ENCODE measurements at regions of chr3 and their contacts with region 1.

Region 1: DNA sequence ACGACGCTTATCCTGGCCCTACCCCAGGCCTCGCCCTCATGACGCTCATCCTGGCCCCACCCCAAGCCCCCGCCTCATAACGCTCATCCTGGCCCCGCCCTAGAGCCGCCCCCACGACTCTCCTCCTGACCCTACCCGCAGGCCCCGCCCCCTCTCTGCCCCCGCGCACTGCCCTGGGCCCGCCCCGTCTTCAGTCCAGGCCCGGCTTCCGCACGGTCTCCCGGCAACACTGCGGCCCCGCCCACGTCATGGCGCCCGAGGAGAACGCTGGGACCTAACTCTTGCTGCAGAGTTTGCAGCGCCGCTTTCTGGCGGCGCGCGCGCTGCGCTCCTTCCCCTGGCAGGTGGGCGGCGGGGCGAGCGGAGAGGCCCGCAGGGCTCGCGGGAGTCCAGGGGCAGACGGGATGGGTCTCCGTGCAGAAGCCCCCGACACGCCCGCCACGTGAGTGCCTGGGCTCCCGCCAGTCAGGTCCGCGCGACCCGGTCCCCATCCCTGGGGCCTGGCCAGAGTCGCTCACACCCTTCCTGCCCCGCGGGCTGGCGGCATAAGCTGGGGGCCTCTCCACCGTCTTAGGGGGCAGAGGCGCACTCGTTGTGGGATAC is 52.5 kb upstream of the ROPN1B start:
- DNase-seq: peak; percentile 98
- H3K4me3 Mint-ChIP-seq: peak overlapping the region; percentile 84
- H3K27ac Mint-ChIP-seq: peak overlapping the region; percentile 78
- H3K4me1 Mint-ChIP-seq: peaks cover 31% of the 10 kb centered on the region
- H3K27me3 Mint-ChIP-seq: no peaks in the 10 kb centered on the region

Region 2: GRCh38 chr3:125519678-125520589 is 396.5 kb before region 1 on chr3 and contains the start of gene SNX4:
- CTCF ChIA-PET with region 1: no interaction called
- intact Hi-C with region 1: loop called (anchors 2 kb)
- DNase-seq: peak; percentile 89
- H3K4me3 Mint-ChIP-seq: peak within 1 kb of the TSS; percentile 91
- H3K27ac Mint-ChIP-seq: peak within 1 kb of the TSS; percentile 82
- H3K4me1 Mint-ChIP-seq: peaks cover 41% of the 10 kb centered on the region
- H3K27me3 Mint-ChIP-seq: no peaks in the 10 kb centered on the region
- total RNA-seq, gene SNX4: 24.8 to 27.8 TPM

Region 3: DNA sequence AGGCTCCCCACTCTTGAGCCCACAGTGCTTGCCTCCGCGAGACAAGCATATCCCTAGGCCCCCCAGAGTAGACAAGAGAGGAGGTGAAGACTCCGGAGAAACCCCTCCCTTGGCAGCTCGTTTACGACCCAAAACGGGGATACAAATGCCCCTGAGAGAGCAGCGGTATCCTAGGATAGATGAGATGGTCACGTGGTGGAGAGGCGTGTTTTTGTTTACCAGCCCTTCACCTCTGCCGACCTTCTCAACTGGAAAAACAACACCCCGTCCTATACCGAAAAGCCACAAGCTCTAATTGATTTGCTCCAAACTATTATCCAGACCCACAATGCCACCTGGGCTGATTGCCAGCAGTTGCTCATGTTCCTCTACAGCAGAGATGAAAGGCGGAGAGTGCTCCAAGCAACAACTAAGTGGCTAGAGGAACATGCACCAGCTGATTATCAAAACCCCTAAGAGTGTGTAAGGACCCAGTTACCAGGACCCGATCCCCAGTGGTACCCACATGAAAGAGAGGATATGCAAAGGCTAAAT is 221.6 kb before region 1 on chr3:
- CTCF ChIA-PET with region 1: no interaction called
- intact Hi-C with region 1: loop called (anchors 5 kb)
- DNase-seq: no peak
- H3K4me3 Mint-ChIP-seq: no peak overlapping the region
- H3K27ac Mint-ChIP-seq: no peak overlapping the region
- H3K4me1 Mint-ChIP-seq: no peaks in the 10 kb centered on the region
- H3K27me3 Mint-ChIP-seq: peaks cover 3% of the 10 kb centered on the region

Region 4: DNA sequence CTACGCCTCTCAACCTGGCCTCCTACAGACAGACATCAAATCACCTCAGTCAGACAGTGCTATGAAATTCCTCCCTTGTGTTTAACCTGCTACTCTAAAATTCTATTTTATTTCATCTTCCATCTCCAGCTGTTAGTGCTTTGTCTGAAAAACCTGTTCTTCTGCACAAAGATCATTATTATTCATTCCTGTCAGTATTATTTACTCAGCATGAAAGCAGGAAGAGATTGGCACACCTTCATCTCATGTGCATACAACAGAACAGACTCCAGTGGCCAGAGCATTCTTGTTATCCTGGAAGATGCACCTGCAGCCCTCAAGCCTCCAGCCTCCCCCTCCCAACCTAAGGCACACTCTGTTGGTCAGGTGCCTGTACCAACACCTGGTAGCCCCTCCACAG is 50.7 kb after region 1 on chr3:
- CTCF ChIA-PET with region 1: no interaction called
- intact Hi-C with region 1: loop called (anchors 10 kb)
- DNase-seq: no peak
- H3K4me3 Mint-ChIP-seq: no peak overlapping the region
- H3K27ac Mint-ChIP-seq: no peak overlapping the region
- H3K4me1 Mint-ChIP-seq: peaks cover 3% of the 10 kb centered on the region
- H3K27me3 Mint-ChIP-seq: peaks cover 19% of the 10 kb centered on the region

Region 5: DNA sequence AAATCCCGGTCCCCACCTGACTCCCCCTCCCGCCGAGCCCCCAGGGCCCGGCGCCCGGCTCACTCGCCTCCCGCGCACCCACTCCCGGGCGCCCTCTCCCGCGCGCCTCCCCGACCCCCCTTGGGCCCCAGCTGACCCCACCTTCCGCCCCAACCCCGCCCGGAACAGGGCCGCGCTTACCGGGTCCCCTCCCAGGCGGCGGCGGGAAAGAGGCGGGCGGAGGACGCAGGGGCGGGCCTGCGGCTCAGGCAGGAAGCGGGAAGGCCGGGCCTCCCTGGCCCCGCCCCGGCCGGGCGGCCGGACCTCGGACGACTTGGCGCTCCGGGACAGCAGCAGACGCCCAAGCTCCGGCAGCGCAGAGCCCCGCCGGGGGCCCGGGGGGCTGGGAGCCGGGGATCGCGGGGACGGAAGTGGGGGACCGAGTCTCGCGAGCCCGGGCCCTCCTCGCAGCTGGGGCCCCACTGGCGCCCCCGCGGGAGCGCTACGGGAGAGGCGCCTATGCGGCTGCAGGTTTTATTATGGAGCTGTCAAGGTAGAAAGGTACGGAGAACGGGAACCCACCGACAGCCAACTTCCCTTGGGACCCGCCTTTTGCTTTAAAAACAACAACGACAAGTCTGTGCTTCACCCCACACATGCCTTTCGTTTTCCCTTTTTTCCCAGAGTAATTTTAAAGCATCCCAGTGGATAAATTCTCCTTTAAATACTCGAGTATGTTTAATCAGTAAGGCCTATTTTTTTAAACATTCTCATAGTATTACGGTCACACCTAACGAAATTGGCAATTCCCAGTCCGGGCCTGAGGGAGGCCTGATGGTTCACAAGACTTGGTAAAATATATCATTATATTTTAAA is 167.7 kb after region 1 on chr3 and contains the start of gene SLC41A3:
- CTCF ChIA-PET with region 1: no interaction called
- intact Hi-C with region 1: loop called (anchors 1 kb)
- DNase-seq: peak; percentile 88
- H3K4me3 Mint-ChIP-seq: peak within 1 kb of the TSS; percentile 92
- H3K27ac Mint-ChIP-seq: peak within 1 kb of the TSS; percentile 84
- H3K4me1 Mint-ChIP-seq: peaks cover 20% of the 10 kb centered on the region
- H3K27me3 Mint-ChIP-seq: no peaks in the 10 kb centered on the region
- total RNA-seq, gene SLC41A3: 24.0 to 24.7 TPM

Region 6: GRCh38 chr3:126475413-126476114 is 559.1 kb after region 1 on chr3 and contains the start of gene ZXDC:
- CTCF ChIA-PET with region 1: no interaction called
- intact Hi-C with region 1: loop called (anchors 1 kb)
- DNase-seq: peak; percentile 91
- H3K4me3 Mint-ChIP-seq: peak within 1 kb of the TSS; percentile 90
- H3K27ac Mint-ChIP-seq: peak within 1 kb of the TSS; percentile 76
- H3K4me1 Mint-ChIP-seq: peaks cover 35% of the 10 kb centered on the region
- H3K27me3 Mint-ChIP-seq: no peaks in the 10 kb centered on the region
- total RNA-seq, gene ZXDC: 23.9 TPM